ENCODE measurements at regions of chr1 and their contacts with region 1.

Region 1: GRCh38 chr1:89670163-89670562 is 37.2 kb downstream of the LRRC8C start:
- DNase-seq: no peak
- ATAC-seq: peak; percentile 81
- H3K4me3 Mint-ChIP-seq: peak overlapping the region; percentile 14
- H3K27ac Mint-ChIP-seq: peak overlapping the region; percentile 17
- H3K4me1 Mint-ChIP-seq: peaks cover 76% of the 10 kb centered on the region
- H3K27me3 Mint-ChIP-seq: no peaks in the 10 kb centered on the region

Region 2: DNA sequence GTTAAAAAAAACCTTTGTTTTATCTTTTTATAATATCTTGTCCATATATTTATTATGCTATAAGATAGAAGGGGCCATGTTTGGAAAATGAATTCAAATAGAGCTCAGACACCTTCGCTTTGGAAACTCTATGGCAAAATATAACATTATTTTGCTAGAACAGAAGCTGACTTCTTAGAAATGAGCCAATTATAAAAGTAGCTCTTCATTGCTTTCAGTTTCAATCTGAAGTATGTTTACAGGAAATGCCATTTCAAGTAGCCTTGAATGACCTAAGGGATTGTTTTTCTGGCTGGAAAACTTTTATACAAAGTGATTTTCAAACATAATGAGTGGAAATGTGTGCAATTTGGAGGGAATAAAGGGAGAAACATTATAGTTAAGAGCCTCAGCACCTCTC is 359.7 kb before region 1 on chr1:
- CTCF ChIA-PET with region 1: no interaction called
- POLR2A ChIA-PET with region 1: no interaction called
- DNase-seq: no peak
- ATAC-seq: peak; percentile 78
- H3K4me3 Mint-ChIP-seq: peak overlapping the region; percentile 60
- H3K27ac Mint-ChIP-seq: peak overlapping the region; percentile 93
- H3K4me1 Mint-ChIP-seq: peaks cover 57% of the 10 kb centered on the region
- H3K27me3 Mint-ChIP-seq: no peaks in the 10 kb centered on the region

Region 3: GRCh38 chr1:89545264-89546038 is 124.7 kb before region 1 on chr1:
- CTCF ChIA-PET with region 1: no interaction called
- POLR2A ChIA-PET with region 1: no interaction called
- DNase-seq: peak; percentile 36
- ATAC-seq: peak; percentile 40
- H3K4me3 Mint-ChIP-seq: no peak overlapping the region
- H3K27ac Mint-ChIP-seq: no peak overlapping the region
- H3K4me1 Mint-ChIP-seq: peaks cover 35% of the 10 kb centered on the region
- H3K27me3 Mint-ChIP-seq: no peaks in the 10 kb centered on the region

Region 4: GRCh38 chr1:89657886-89658285 is 12.3 kb before region 1 on chr1:
- CTCF ChIA-PET with region 1: interaction called, 24 read pairs
- POLR2A ChIA-PET with region 1: interaction called, 5 read pairs
- DNase-seq: peak; percentile 59
- ATAC-seq: peak; percentile 84
- H3K4me3 Mint-ChIP-seq: peak overlapping the region; percentile 60
- H3K27ac Mint-ChIP-seq: peak overlapping the region; percentile 79
- H3K4me1 Mint-ChIP-seq: peaks cover 92% of the 10 kb centered on the region
- H3K27me3 Mint-ChIP-seq: no peaks in the 10 kb centered on the region